PC-3 (cell line): ENCODE measurements at regions of chr14 and their contacts with region 1.

Region 1: DNA sequence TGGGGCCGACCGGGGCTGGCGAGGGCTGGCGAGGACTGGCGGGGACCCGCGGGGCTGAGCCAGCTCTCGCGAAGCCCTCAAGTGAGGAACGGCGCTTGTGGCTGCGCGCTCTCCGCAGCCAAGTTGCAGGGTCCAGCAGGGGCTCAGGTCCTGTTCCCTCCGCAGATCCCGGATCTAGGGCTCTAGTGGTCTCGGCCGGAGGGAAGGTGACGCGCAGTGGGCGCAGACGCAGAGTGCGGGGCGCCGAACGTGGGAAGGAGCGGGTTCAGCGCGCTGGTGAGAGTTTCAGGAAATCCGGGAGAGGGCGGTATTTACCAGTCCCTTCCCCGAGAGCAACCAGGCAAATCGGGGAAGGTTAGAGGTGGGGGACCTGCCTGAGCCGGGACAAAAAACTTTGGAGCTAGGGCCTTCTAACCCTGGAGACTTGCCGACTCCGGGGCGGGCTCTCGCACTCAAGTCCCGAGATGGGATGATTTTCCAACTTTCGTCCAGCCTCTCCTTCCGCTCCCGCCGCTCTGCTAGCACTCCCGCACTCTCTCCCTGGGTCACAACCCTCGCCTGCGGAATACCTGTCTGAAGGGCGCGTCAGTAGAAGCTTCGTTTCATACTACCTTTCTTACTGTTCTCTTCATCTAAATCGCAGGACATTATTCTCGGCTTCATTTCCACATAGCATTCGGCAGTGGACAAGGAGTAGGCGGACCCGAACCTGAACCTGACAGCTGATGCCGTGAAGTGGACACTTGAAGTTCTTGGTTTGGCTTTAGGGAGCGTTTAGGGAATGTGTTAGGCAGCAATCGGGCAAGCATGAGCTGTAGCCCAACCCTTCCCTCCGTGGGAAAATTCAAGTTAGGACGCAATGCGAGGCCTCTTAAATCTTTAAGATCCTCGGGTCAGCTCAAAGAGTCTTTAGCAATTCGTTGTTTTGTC is 13.6 kb upstream of the PAX9 start:
- DNase-seq: peak; percentile 73
- ATAC-seq: peak; percentile 93
- H3K4me3 ChIP-seq: peak overlapping the region; percentile 82
- H3K27ac ChIP-seq: no peak overlapping the region
- H3K4me1 ChIP-seq: peaks cover 15% of the 10 kb centered on the region
- H3K27me3 ChIP-seq: no peaks in the 10 kb centered on the region
- CTCF ChIP-seq: peak; percentile 86

Region 2: GRCh38 chr14:35167496-35167895 is 1480.6 kb before region 1 on chr14:
- CTCF ChIA-PET with region 1: no interaction called
- POLR2A ChIA-PET with region 1: interaction called, 14 read pairs
- intact Hi-C with region 1: no loop called
- DNase-seq: no peak
- ATAC-seq: no peak
- H3K4me3 ChIP-seq: no peak overlapping the region
- H3K27ac ChIP-seq: no peak overlapping the region
- H3K4me1 ChIP-seq: no peaks in the 10 kb centered on the region
- H3K27me3 ChIP-seq: no peaks in the 10 kb centered on the region
- CTCF ChIP-seq: no peak

Region 3: GRCh38 chr14:36747411-36748184 is 99.5 kb after region 1 on chr14:
- CTCF ChIA-PET with region 1: no interaction called
- POLR2A ChIA-PET with region 1: no interaction called
- intact Hi-C with region 1: loop called (anchors 2 kb)
- DNase-seq: peak; percentile 66
- ATAC-seq: peak; percentile 60
- H3K4me3 ChIP-seq: no peak overlapping the region
- H3K27ac ChIP-seq: no peak overlapping the region
- H3K4me1 ChIP-seq: peaks cover 18% of the 10 kb centered on the region
- H3K27me3 ChIP-seq: no peaks in the 10 kb centered on the region
- CTCF ChIP-seq: peak; percentile 92

Region 4: DNA sequence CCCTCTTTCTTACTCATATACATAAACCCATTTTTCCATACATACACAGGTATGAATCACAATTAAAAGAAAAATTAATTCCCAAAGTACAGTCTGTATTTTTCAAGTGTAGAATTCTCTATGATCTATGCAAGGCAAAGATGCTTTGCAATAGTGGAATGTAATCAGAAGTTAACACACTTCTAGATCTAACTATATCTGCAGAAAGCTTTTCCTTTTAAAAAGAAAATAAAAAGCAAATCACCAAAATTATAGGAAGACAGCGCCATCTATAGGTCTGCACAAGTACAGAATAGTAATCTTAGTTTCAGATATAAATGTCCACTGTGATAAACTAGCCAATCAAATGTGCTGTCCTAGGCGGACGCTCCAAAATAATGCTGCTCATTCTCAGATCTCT is 502.3 kb after region 1 on chr14:
- CTCF ChIA-PET with region 1: interaction called, 7 read pairs
- POLR2A ChIA-PET with region 1: no interaction called
- intact Hi-C with region 1: loop called (anchors 1 kb)
- DNase-seq: peak; percentile 76
- ATAC-seq: peak; percentile 82
- H3K4me3 ChIP-seq: no peak overlapping the region
- H3K27ac ChIP-seq: no peak overlapping the region
- H3K4me1 ChIP-seq: peaks cover 5% of the 10 kb centered on the region
- H3K27me3 ChIP-seq: no peaks in the 10 kb centered on the region
- CTCF ChIP-seq: peak; percentile 90